CD4-positive, alpha-beta memory T cell (primary cell): ENCODE measurements at regions of chr19 and their contacts with region 1.

Region 1: GRCh38 chr19:3100081-3100864 is 6.1 kb downstream of the GNA11 start:
- DNase-seq: no peak
- H3K4me3 ChIP-seq: no peak overlapping the region
- H3K4me3 Mint-ChIP-seq: peak overlapping the region in 2 of 8 donors; percentile 20 to 86
- H3K27ac ChIP-seq: no peak overlapping the region
- H3K27ac Mint-ChIP-seq: no peak overlapping the region
- H3K4me1 ChIP-seq: peaks cover 37% of the 10 kb centered on the region
- H3K4me1 Mint-ChIP-seq: peaks cover 16 to 34% (median 25%) of the 10 kb centered on the region in 4 donors
- H3K27me3 ChIP-seq: peaks cover 3% of the 10 kb centered on the region
- H3K27me3 Mint-ChIP-seq: peaks cover 5 to 17% of the 10 kb centered on the region in 2 donors

Region 2: DNA sequence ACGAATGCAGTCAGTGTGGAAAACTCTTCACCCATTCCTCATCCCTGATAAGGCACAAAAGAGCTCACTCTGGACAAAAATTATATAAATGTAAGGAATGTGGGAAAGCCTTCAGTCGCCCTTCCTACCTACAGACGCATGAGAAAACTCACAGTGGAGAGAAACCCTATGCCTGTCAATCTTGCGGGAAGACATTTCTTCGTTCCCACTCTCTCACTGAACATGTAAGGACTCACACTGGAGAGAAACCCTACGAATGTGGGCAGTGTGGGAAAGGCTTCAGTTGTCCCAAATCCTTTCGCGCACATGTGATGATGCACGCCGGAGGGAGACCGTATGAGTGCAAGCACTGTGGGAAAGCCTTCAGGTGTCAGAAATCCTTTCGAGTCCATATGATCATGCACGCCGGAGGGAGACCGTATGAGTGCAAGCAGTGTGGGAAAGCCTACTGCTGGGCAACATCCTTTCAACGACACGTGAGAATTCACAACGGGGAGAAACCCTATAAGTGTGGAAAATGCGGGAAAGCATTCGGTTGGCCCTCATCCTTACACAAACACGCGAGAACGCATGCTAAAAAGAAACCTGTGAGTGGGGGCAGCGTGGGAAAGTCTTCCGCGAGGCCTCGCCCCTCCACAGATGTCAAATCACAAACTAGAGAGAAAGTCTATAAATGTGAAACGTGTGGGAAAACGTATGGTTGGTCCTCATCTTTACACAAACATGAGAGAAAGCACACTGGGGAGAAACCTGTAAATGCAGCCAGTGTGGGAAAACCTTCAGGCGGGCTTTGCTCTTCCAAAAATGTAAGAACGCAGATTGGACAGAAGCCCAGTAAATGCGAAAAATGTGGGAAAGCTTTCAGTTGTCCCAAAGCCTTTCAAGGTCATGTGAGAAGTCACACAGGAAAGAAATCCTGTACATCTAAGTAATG is 222.6 kb before region 1 on chr19:
- CTCF ChIA-PET with region 1: no interaction called
- POLR2A ChIA-PET with region 1: no interaction called
- intact Hi-C with region 1: no loop called
- DNase-seq: no peak
- H3K4me3 ChIP-seq: no peak overlapping the region
- H3K4me3 Mint-ChIP-seq: no peak overlapping the region
- H3K27ac ChIP-seq: no peak overlapping the region
- H3K27ac Mint-ChIP-seq: no peak overlapping the region
- H3K4me1 ChIP-seq: no peaks in the 10 kb centered on the region
- H3K4me1 Mint-ChIP-seq: no peaks in the 10 kb centered on the region
- H3K27me3 ChIP-seq: no peaks in the 10 kb centered on the region
- H3K27me3 Mint-ChIP-seq: no peaks in the 10 kb centered on the region

Region 3: GRCh38 chr19:3010871-3011270 is 89.4 kb before region 1 on chr19:
- CTCF ChIA-PET with region 1: no interaction called
- POLR2A ChIA-PET with region 1: no interaction called
- intact Hi-C with region 1: no loop called
- DNase-seq: no peak
- H3K4me3 ChIP-seq: no peak overlapping the region
- H3K4me3 Mint-ChIP-seq: no peak overlapping the region
- H3K27ac ChIP-seq: no peak overlapping the region
- H3K27ac Mint-ChIP-seq: no peak overlapping the region
- H3K4me1 ChIP-seq: no peaks in the 10 kb centered on the region
- H3K4me1 Mint-ChIP-seq: no peaks in the 10 kb centered on the region
- H3K27me3 ChIP-seq: no peaks in the 10 kb centered on the region
- H3K27me3 Mint-ChIP-seq: no peaks in the 10 kb centered on the region

Region 4: GRCh38 chr19:3084943-3085342 is 15.3 kb before region 1 on chr19:
- CTCF ChIA-PET with region 1: interaction called, 22 read pairs
- POLR2A ChIA-PET with region 1: no interaction called
- intact Hi-C with region 1: no loop called
- DNase-seq: no peak
- H3K4me3 ChIP-seq: no peak overlapping the region
- H3K4me3 Mint-ChIP-seq: no peak overlapping the region
- H3K27ac ChIP-seq: no peak overlapping the region
- H3K27ac Mint-ChIP-seq: no peak overlapping the region
- H3K4me1 ChIP-seq: no peaks in the 10 kb centered on the region
- H3K4me1 Mint-ChIP-seq: no peaks in the 10 kb centered on the region
- H3K27me3 ChIP-seq: no peaks in the 10 kb centered on the region
- H3K27me3 Mint-ChIP-seq: no peaks in the 10 kb centered on the region